ENCODE measurements at regions of chr7 and their contacts with region 1.

Region 1: GRCh38 chr7:3146571-3147226 is 103.0 kb upstream of the CARD11 start:
- DNase-seq: no peak
- H3K4me3 ChIP-seq: no peak overlapping the region
- H3K27ac ChIP-seq: no peak overlapping the region
- H3K4me1 ChIP-seq: no peaks in the 10 kb centered on the region
- H3K27me3 ChIP-seq: no peaks in the 10 kb centered on the region
- CTCF ChIP-seq: no peak

Region 2: DNA sequence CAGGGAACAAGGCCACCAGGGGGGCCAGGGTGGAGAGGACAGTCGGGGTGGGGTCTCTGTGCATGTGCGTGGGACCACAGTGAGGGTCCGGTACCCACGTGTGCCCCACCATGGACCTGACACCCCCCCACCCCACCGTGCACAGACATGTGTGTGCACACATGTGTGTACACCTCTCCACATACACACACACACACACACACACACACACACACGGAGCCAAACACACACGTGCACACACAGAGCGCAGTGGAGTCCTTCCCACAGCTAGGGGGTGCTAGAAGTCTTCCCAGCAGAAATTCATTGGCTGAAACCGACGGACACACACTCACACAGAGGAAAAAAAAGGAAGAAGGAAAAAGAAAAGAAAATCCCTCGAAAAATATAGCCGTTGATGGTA is 259.8 kb before region 1 on chr7:
- intact Hi-C with region 1: loop called (anchors 10 kb)
- DNase-seq: peak in 4 of 5 donors; percentile 75 to 91 (median 86)
- H3K4me3 ChIP-seq: no peak overlapping the region
- H3K27ac ChIP-seq: no peak overlapping the region
- H3K4me1 ChIP-seq: no peaks in the 10 kb centered on the region
- H3K27me3 ChIP-seq: no peaks in the 10 kb centered on the region
- CTCF ChIP-seq: peak; percentile 81

Region 3: GRCh38 chr7:2939193-2939885 is 207.4 kb before region 1 on chr7:
- intact Hi-C with region 1: no loop called
- DNase-seq: peak in 2 of 5 donors; percentile 28 to 44
- H3K4me3 ChIP-seq: no peak overlapping the region
- H3K27ac ChIP-seq: no peak overlapping the region
- H3K4me1 ChIP-seq: no peaks in the 10 kb centered on the region
- H3K27me3 ChIP-seq: peaks cover 2% of the 10 kb centered on the region
- CTCF ChIP-seq: no peak

Measured in kidney (tissue), 22 donors.